ENCODE measurements at regions of chr3 and their contacts with region 1.

Region 1: DNA sequence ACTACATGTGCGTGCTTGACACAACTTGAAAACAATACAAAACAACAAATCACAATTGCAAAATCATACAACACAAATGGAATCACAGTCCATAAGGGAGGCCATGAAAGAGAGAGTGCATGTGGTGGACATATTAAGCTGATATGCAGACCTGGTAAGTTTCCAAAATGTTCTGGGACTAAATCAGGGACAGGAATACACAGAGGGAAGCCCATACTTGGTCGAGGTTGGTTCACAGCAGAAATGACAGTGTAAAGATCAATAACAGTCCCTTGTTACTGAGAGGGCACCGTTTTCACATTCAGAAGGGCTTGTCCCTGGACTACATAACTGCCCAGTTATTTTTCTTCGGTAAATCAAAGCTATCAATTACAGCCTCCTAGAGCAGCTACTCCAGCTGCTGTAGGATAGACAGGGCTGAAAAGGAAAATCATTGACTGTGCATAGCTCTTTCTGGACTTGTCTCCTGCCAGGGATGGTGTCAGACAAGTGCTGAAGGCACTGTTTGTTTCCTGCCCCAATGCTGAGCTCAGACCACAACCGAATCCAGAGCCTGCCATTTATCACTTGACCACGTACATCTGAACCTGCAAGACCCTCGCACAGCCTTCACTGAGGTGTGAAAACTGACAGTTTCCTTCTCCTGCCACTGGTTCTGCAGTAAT is 79.5 kb upstream of the KCNMB2 start:
- DNase-seq: no peak
- CTCF ChIP-seq: no peak

Region 2: GRCh38 chr3:178475062-178475461 is 18.3 kb after region 1 on chr3:
- CTCF ChIA-PET with region 1: interaction called, 22 read pairs
- POLR2A ChIA-PET with region 1: no interaction called
- DNase-seq: no peak
- CTCF ChIP-seq: no peak

Measured in GM10248 (cell line).